Adrenal gland (tissue), 19 donors: ENCODE measurements at regions of chr6 and their contacts with region 1.

Region 1: DNA sequence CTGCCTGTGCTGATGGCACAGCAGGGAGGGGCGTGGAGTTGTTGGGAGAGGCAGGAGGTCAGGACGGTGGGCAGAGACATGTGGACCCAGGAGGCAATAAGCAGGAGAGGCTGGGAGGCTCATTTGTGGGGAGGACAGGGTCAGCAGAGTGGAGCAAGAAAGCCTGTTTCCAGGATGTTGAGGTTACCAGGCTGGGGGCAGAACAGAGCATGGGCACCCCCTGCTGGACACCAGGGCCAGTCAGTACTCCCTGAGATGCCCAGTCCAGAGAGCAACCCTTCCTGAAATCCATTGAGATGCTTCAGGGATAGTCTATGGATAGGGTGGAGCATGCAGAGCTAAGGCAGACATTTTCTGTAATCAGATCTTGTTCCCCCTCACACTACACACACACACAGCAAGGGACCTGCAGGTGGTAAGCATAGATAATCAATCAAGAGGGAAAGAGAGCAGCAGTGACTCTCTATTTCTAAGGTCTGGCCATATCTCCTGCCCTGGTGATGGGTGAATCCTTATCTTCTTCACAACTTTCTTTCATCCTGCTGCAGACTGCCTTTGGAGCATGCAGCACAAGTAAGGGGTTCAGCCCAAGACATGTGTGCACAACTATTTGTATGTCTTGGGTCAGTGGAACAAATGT is 41.7 kb downstream of the MOCS1 start:
- DNase-seq: peak; percentile 64 to 86 (median 74)
- H3K4me3 ChIP-seq: no peak overlapping the region
- H3K27ac ChIP-seq: peak overlapping the region in 1 of 5 donors; percentile 62
- H3K4me1 ChIP-seq: no peaks in the 10 kb centered on the region
- H3K27me3 ChIP-seq: no peaks in the 10 kb centered on the region
- CTCF ChIP-seq: peak; percentile 52 to 80 (median 74)
- POLR2A ChIP-seq: no peak

Region 2: DNA sequence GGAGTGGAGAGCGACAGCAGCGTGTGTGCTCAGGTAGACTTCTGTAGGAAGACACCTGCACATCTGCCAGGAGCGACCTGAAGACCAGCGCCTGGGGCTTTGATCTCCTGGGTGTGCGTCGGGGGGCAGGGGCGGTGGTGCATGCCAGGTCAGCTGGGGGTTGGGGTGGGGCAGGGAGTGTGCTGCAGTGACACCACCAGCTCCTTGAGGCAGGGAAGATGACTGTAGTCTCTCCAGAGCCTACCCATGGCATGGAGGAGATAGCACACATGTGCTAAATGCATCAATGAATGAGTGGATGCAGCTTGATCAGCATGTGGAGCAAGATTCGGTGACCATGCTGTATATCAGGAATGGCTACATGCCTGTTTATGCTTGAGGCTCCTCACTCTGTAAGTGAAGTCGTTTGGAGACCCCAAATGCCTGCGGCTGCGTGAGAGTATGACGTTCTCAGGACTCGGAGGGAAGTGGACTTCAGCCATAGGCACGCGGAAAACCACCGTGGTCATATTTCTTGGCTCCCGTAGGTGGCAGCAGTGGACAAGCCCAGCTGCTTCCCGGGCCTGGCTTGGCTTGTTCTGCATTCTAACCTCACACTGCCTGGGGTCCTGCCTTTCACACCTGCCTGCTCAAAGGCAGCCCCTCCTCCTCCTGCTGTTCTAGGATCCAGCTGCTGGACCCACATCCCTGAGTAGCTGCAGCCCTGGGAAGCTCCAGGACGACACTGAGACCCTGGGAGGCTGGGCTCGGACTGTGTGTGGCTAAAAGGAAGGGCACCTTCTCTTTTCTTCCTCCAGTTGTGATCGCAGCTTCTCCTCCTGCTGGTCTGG is 530.7 kb before region 1 on chr6:
- intact Hi-C with region 1: loop called (anchors 5 to 10 kb)
- DNase-seq: peak; percentile 70 to 83 (median 78)
- H3K4me3 ChIP-seq: no peak overlapping the region
- H3K27ac ChIP-seq: peak overlapping the region in 2 of 5 donors; percentile 19 to 64
- H3K4me1 ChIP-seq: peaks cover 2 to 3% of the 10 kb centered on the region in 2 donors
- H3K27me3 ChIP-seq: no peaks in the 10 kb centered on the region
- CTCF ChIP-seq: peak; percentile 59 to 85 (median 75)
- POLR2A ChIP-seq: no peak

Region 3: GRCh38 chr6:39377539-39377950 is 515.1 kb before region 1 on chr6:
- intact Hi-C with region 1: loop called in 1 of 2 experiments (anchors 2 kb)
- DNase-seq: peak; percentile 70 to 82 (median 73)
- H3K4me3 ChIP-seq: no peak overlapping the region
- H3K27ac ChIP-seq: no peak overlapping the region
- H3K4me1 ChIP-seq: peaks cover 0 to 3% of the 10 kb centered on the region in 2 donors
- H3K27me3 ChIP-seq: no peaks in the 10 kb centered on the region
- CTCF ChIP-seq: peak; percentile 39 to 74 (median 64)
- POLR2A ChIP-seq: no peak